GM13976 (cell line): ENCODE measurements at regions of chrX and their contacts with region 1.

Region 1: GRCh38 chrX:7170903-7171302 is 22.9 kb upstream of the PUDP start:
- DNase-seq: no peak
- CTCF ChIP-seq: peak; percentile 12

Region 2: GRCh38 chrX:7055386-7056137 is 115.3 kb before region 1 on chrX:
- in situ Hi-C with region 1: no loop called
- DNase-seq: no peak
- CTCF ChIP-seq: no peak

Region 3: DNA sequence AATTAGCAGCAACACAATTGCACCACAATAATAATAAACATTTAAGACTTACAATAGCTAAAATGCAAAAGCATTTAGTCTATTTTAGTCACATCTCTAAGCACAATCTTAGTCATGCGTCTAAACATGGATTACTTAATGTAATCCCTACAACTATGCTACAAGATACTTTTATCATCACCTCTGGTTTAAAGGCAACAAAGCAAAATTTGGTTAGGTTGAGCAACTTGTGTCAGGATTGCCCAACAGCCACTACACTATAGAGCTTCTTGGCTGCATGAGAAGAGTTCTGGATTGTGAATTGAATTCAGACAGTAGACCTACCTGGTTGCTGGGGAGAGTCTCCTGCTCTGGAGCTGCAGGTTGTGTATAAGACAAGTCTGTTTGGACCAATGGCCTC is 123.6 kb after region 1 on chrX:
- in situ Hi-C with region 1: no loop called
- DNase-seq: no peak
- CTCF ChIP-seq: no peak

Region 4: DNA sequence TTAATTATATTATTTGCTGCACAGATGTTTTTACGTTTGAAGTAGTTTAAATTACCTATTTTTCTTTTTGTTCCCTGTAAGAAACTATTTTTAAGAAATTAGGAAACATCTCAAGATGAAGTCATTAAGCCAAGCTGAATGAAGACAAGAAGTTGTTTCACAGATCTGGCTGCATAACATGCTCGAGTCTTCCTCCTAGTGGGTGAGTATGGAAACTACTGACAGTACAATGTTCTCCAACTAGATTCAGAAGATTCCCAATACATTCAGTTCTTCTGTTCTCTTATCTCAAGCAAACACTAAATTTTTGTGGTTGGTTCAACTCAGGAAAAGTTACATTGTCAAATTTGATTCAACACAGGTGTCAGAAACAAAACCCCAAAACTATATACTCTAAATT is 415.2 kb after region 1 on chrX:
- in situ Hi-C with region 1: loop called (anchors 25 kb)
- DNase-seq: peak; percentile 26
- CTCF ChIP-seq: peak; percentile 13